Cardiac septum (tissue), 1 donor: ENCODE measurements at regions of chr1 and their contacts with region 1.

Region 1: DNA sequence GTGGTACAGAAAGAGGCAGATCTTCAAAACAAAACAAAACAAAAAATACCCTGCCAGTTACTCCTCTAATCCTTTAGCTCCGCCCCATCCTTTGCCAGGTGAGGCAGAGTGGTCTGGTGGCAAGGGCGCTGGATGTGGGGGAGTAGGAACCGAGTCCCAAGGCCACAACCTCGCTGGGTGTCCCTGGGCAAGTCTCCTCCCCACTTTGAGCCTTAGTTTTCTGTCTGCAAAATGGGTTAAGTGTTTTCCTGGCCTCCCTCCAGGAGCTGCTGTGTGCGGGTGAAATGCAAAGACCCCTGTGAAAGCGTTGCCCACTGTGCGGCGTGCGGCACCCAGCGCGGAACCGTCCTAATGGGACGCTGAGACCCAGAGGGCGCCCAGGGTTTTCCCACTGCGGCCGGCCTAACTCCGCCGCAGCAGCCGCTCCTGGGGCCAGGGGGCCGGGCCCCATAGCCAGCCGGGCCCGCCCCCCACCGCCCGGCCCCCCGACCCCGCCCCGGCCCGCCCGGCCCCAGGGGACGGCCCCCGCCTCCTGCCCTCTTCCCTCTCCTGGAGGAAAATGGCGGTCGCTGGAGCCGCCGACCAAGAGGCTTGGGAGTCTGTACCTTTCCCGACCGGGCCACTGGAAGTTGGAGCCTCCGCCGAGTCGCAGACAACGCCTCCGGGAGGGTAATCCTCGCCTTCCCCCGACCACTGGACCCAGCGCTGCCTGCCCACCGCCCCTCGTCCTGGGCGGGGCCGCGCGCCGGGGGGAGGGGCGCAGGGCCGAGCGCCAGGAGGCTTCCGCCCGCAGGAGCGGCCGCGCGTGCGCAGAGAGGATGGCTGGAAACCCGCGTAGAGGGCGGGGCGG is at the starts of genes ERMAP and SVBP:
- DNase-seq: peak; percentile 98
- total RNA-seq, gene ERMAP: 8.5 TPM
- total RNA-seq, gene SVBP: 17.7 TPM

Region 2: DNA sequence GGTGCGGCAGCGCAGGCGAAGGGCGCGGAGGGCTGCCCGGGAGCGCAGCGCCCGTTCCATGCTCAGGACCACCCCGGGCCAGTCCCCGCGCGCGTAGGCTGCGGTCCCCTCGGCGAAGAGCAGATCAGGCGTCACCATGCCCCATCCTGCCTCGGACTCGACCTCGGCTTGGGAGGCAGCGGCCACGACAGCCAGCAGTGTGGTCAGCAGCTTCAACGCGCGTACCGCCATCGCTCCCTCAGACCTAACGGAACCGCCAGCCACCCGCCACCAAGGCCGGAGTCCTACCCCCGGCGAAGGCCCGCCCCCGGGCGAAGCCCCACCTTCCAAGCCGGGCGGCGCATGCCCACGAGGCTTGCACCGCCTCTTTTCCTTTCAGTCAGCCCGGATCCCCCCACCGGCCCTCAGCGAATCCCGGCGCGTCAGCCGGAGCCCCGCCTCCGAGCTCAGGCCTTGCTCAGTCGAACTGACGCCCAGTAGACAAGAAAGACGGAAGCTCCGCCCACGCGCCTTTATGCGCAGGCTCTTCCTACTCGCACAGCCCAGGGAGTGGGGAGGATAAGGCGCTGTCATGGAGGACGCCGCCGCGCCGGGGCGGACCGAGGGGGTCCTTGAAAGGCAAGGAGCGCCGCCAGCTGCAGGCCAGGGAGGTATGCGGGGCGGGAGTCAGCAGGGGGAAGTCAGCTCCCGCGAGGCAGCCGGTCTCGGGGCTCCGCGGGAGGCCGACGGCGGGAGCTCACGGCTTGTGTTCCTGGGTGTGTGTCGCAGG is 49.9 kb before region 1 on chr1 and contains the starts of genes C1orf50 and P3H1:
- intact Hi-C with region 1: loop called (anchors 2 kb)
- DNase-seq: peak; percentile 100
- total RNA-seq, gene C1orf50: 11.0 TPM
- total RNA-seq, gene P3H1: 12.2 TPM

Region 3: DNA sequence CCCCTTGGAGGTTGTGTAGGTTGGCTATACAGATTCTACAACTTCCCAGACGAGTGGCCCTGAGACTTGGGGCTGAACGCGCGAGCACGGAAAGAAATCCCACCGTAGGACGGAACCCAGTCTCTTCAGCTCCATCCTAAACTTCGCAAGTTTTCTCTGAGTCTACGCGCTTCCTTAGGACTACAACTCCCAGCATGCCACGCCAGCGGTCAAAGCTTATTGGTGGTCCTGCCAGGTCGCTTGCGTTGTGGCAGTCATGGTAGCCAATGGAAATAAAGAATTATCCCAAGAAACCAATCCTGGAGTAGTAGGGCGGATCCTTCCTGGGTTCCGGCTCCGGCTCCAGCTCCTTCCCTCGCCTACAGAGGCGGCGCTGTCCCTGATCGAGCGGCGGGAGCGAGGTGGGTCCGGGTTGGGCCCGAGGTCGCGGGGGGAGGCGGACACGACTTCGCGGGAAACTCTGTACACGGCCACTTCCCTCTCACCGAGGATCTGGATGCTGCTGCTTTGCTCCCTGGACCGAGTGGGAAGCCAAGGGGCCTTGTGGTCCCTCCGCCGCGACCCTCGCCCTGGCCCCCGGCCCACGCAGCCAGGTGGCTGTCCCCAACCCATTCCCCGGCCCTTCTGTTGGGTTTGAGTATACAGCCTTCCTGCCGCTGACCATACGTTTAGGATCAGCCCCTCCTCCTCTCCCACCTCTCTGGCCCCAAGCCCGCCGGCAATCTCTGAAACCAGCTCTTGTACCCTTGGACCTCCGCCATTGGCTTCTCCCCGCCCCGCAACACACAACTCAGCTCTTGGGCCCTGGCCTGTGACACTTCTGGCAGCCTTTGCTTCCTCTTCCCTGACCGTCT is 29.7 kb after region 1 on chr1 and contains the start of gene ZNF691:
- intact Hi-C with region 1: loop called (anchors 2 kb)
- DNase-seq: peak; percentile 95
- total RNA-seq, gene ZNF691: 6.5 TPM

Region 4: DNA sequence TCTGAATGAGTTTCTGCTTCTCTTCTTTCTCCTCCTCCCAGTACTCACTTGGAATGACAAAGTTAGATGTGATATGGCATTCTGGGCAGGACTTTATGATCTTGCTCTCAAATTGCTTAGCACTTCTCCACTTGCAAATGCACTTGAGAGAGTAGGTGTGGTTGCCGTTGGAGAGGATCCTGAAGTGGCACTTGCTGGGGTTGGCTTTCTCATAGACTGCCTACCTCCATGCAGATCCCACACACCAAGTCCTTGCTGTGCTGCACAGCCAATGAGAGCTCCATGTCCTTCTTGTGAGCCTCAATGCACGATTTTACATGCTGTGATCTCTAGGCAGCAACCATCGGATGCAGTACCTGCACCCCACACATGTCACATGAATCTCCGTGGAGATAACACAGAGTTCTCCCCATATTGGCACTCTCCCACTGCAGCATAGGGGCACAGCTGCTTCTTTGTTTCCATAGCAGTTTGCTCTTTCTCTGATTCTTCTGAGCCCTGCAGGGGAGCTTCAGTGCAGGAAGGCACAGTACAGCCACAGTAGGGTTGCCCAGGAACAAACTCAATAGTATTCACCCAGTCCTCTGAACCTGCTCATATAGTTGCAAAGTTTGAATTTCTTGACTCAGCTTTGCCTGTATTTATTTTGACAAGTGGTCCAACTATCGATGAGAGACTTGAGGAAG is 74.8 kb after region 1 on chr1:
- intact Hi-C with region 1: no loop called
- DNase-seq: no peak